ENCODE measurements at regions of chr18 and their contacts with region 1.

Region 1: GRCh38 chr18:23401400-23402347 is 51.4 kb upstream of the RIOK3 start:
- DNase-seq: no peak
- ATAC-seq: peak in 1 of 4 donors; percentile 38
- H3K4me3 ChIP-seq: no peak overlapping the region
- H3K27ac ChIP-seq: no peak overlapping the region
- H3K4me1 ChIP-seq: peaks cover 0 to 6% (median 0%) of the 10 kb centered on the region in 12 donors
- H3K27me3 ChIP-seq: no peaks in the 10 kb centered on the region
- CTCF ChIP-seq: no peak
- POLR2A ChIP-seq: no peak

Region 2: DNA sequence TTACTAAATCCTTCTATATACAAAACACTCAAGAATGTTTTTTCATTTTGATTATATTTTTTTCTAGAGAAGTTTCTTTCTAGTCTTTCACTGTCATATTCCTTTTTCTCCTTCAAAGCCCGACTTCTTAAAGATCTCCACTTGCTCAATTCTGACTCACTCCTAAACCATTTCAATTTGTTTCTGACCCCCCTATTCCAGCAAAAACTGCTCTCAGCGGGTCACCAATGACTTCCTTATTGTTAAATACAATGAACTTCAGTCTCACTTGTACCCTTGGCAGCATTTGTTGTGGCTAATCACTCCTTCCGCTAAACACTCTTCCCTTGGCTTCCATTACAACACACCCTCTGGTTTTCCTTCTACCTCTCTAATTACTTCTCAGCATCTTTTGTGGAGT is 579.6 kb before region 1 on chr18:
- intact Hi-C with region 1: loop called in 1 of 10 experiments (anchors 10 kb)
- DNase-seq: no peak
- ATAC-seq: no peak
- H3K4me3 ChIP-seq: no peak overlapping the region
- H3K27ac ChIP-seq: no peak overlapping the region
- H3K4me1 ChIP-seq: no peaks in the 10 kb centered on the region
- H3K27me3 ChIP-seq: no peaks in the 10 kb centered on the region
- CTCF ChIP-seq: no peak
- POLR2A ChIP-seq: no peak

Region 3: DNA sequence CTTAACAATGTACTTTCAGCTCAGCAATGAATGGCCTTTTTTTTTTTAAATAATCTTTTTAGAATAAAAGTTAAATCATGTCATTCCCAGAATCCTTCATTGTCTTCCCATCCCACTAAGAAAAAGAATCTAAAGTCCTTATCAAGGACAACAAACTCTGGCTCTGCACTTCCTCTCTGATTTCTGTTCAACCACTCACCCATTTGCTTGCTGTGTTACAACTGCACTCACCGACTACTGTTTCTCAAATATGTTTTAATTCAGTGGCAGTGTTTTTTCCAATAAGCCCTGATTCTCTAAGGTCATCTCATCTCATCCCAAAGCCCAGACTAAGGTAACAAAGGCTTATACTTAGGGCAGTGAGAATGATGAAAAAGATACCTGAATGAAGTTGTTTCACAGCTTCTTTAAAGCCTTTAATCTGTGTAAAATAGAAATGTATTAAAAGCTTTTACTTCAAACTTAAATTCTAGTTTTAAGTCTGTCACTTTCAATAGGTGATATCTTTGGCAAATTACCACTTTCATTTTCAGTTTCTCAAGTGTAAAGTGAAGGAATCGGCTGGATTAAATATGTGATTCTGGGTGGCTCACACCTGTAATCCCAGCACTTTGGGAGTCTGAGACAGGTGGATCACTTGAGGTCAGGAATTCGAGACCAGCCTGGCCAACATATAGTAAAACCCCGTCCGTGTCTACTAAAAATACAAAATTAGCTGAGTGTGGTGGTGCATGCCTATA is 380.9 kb before region 1 on chr18:
- intact Hi-C with region 1: loop called in 1 of 10 experiments (anchors 10 kb)
- DNase-seq: no peak
- ATAC-seq: no peak
- H3K4me3 ChIP-seq: peak overlapping the region in 1 of 12 donors; percentile 10
- H3K27ac ChIP-seq: no peak overlapping the region
- H3K4me1 ChIP-seq: peaks cover 0 to 12% (median 0%) of the 10 kb centered on the region in 12 donors
- H3K27me3 ChIP-seq: no peaks in the 10 kb centered on the region
- CTCF ChIP-seq: no peak
- POLR2A ChIP-seq: no peak

Measured in heart left ventricle (tissue), 16 donors.